ENCODE measurements at regions of chr9 and their contacts with region 1.

Region 1: DNA sequence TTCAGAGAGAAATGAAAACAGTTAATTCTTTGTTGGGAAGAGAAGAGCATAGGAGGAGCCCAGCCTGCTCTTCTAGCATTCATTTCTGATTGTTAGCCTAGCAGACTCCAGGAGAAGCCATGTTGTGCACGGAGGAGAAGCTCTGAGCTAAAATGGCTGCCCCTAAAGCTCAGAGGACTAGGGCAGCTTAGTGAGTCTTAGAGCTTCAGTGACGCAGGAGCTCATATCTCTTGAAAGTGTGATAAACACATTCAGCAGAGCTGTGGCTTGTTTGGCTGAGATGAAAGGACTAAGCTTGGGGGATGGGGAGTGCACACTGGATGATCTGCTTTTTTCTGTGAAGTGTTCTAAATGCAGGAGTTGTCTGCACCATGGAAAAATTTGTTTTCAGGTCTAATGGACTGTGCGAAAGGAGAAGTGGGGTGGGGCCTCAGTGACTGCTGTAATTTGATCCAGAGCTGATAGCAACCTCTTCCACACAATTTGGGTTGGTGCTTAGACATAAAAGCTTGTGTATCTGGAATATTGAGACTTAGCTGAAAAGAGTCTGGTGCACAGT is 58.5 kb downstream of the ZNF462 start:
- DNase-seq: peak in 1 of 3 donors; percentile 61
- ATAC-seq: peak; percentile 80
- H3K4me3 ChIP-seq: no peak overlapping the region
- H3K4me1 ChIP-seq: peaks cover 20% of the 10 kb centered on the region
- CTCF ChIP-seq: no peak

Region 2: GRCh38 chr9:106862825-106863720 is 58.3 kb before region 1 on chr9 and contains the start of gene ZNF462:
- intact Hi-C with region 1: loop called in 1 of 2 experiments (anchors 5 kb)
- DNase-seq: peak; percentile 50 to 71 (median 64)
- ATAC-seq: peak; percentile 51
- H3K4me3 ChIP-seq: peak within 1 kb of the TSS; percentile 46
- H3K4me1 ChIP-seq: peaks cover 7% of the 10 kb centered on the region
- CTCF ChIP-seq: no peak
- total RNA-seq, gene ZNF462: 34.8 to 54.7 (median 48.7) TPM

Region 3: GRCh38 chr9:106878924-106879323 is 42.5 kb before region 1 on chr9:
- intact Hi-C with region 1: no loop called
- DNase-seq: peak; percentile 59 to 70 (median 59)
- ATAC-seq: peak; percentile 85
- H3K4me3 ChIP-seq: no peak overlapping the region
- H3K4me1 ChIP-seq: peaks cover 14% of the 10 kb centered on the region
- CTCF ChIP-seq: no peak

Region 4: GRCh38 chr9:107102677-107103076 is 181.3 kb after region 1 on chr9:
- intact Hi-C with region 1: no loop called
- DNase-seq: no peak
- ATAC-seq: no peak
- H3K4me3 ChIP-seq: no peak overlapping the region
- H3K4me1 ChIP-seq: no peaks in the 10 kb centered on the region
- CTCF ChIP-seq: no peak